Caco-2 (cell line): ENCODE measurements at regions of chr14 and their contacts with region 1.

Region 1: GRCh38 chr14:95609387-95609990 is 74.6 kb downstream of the GLRX5 start:
- DNase-seq: peak; percentile 51 to 58
- H3K4me3 ChIP-seq: no peak overlapping the region
- H3K4me3 Mint-ChIP-seq: no peak overlapping the region
- H3K27ac Mint-ChIP-seq: no peak overlapping the region
- H3K4me1 ChIP-seq: peaks cover 3% of the 10 kb centered on the region; the same call in 1 of the 2 replicates
- H3K4me1 Mint-ChIP-seq: no peaks in the 10 kb centered on the region
- H3K27me3 ChIP-seq: no peaks in the 10 kb centered on the region; the same call in none of the 2 replicates
- H3K27me3 Mint-ChIP-seq: peaks cover 24% of the 10 kb centered on the region
- CTCF ChIP-seq: peak; percentile 75 to 77

Region 2: GRCh38 chr14:95679998-95680735 is 70.7 kb after region 1 on chr14:
- CTCF ChIA-PET with region 1: interaction called, 3 read pairs
- POLR2A ChIA-PET with region 1: no interaction called
- intact Hi-C with region 1: loop called (anchors 2 kb)
- DNase-seq: peak; percentile 44 to 49
- H3K4me3 ChIP-seq: no peak overlapping the region
- H3K4me3 Mint-ChIP-seq: no peak overlapping the region
- H3K27ac Mint-ChIP-seq: no peak overlapping the region
- H3K4me1 ChIP-seq: peaks cover 5% of the 10 kb centered on the region; the same call in 1 of the 2 replicates
- H3K4me1 Mint-ChIP-seq: no peaks in the 10 kb centered on the region
- H3K27me3 ChIP-seq: no peaks in the 10 kb centered on the region
- H3K27me3 Mint-ChIP-seq: peaks cover 12% of the 10 kb centered on the region
- CTCF ChIP-seq: peak; percentile 37 to 65

Region 3: GRCh38 chr14:95697764-95698163 is 88.3 kb after region 1 on chr14:
- CTCF ChIA-PET with region 1: no interaction called
- POLR2A ChIA-PET with region 1: no interaction called
- intact Hi-C with region 1: loop called (anchors 1 kb)
- DNase-seq: no peak
- H3K4me3 ChIP-seq: no peak overlapping the region
- H3K4me3 Mint-ChIP-seq: no peak overlapping the region
- H3K27ac Mint-ChIP-seq: no peak overlapping the region
- H3K4me1 ChIP-seq: no peaks in the 10 kb centered on the region
- H3K4me1 Mint-ChIP-seq: no peaks in the 10 kb centered on the region
- H3K27me3 ChIP-seq: no peaks in the 10 kb centered on the region; the same call in none of the 2 replicates
- H3K27me3 Mint-ChIP-seq: peaks cover 25% of the 10 kb centered on the region
- CTCF ChIP-seq: no peak

Region 4: DNA sequence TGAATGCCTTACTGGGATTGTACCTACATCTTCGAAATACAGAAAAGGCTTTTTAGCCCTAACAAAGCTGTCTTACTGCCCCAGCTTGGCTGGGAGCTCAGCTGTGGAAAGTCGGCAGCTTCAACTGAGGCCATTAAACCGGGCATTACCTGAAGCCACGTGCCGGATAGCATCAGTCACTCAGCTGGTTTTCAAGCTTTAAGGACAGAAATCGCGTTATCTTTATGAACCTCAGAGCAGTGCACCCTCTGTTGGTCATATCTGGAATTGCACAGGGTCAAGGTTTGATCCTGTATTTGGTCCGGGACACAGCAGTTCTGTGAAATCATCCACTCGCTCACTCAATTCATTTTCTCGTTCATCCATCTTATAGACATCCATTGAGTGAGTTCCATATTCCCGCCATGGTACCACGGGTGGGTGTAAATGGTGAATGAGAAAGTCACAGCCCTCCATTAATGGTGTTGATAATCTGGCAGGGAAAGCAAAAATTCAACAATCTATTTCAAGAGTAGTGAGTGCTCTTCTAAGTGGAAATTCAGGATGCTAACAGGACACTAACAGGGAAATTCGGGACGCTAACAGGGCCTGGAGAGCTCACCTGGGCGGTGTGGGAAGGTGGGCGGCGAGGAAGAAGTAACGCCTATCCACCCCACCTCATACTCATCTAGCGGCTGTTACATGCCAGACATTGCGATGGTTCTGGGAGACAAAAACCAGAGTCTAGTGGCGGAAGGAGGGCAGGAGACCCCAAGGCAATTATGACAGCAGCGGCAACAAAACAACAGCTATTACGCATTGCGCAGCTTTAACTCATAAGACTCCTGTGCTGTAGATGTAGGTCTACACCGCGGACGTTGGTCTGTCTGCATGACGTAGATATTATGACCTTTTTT is 165.0 kb after region 1 on chr14:
- CTCF ChIA-PET with region 1: interaction called, 4 read pairs
- POLR2A ChIA-PET with region 1: no interaction called
- intact Hi-C with region 1: loop called (anchors 1 kb)
- DNase-seq: peak; percentile 53 to 62
- H3K4me3 ChIP-seq: no peak overlapping the region
- H3K4me3 Mint-ChIP-seq: no peak overlapping the region
- H3K27ac Mint-ChIP-seq: no peak overlapping the region
- H3K4me1 ChIP-seq: no peaks in the 10 kb centered on the region
- H3K4me1 Mint-ChIP-seq: no peaks in the 10 kb centered on the region
- H3K27me3 ChIP-seq: no peaks in the 10 kb centered on the region
- H3K27me3 Mint-ChIP-seq: peaks cover 20% of the 10 kb centered on the region
- CTCF ChIP-seq: peak; percentile 75 to 79

Region 5: GRCh38 chr14:95850417-95850816 is 240.9 kb after region 1 on chr14:
- CTCF ChIA-PET with region 1: no interaction called
- POLR2A ChIA-PET with region 1: no interaction called
- intact Hi-C with region 1: no loop called
- DNase-seq: no peak
- H3K4me3 ChIP-seq: no peak overlapping the region
- H3K4me3 Mint-ChIP-seq: no peak overlapping the region
- H3K27ac Mint-ChIP-seq: no peak overlapping the region
- H3K4me1 ChIP-seq: no peaks in the 10 kb centered on the region
- H3K4me1 Mint-ChIP-seq: no peaks in the 10 kb centered on the region
- H3K27me3 ChIP-seq: no peaks in the 10 kb centered on the region
- H3K27me3 Mint-ChIP-seq: peaks cover 20% of the 10 kb centered on the region
- CTCF ChIP-seq: no peak

Region 6: DNA sequence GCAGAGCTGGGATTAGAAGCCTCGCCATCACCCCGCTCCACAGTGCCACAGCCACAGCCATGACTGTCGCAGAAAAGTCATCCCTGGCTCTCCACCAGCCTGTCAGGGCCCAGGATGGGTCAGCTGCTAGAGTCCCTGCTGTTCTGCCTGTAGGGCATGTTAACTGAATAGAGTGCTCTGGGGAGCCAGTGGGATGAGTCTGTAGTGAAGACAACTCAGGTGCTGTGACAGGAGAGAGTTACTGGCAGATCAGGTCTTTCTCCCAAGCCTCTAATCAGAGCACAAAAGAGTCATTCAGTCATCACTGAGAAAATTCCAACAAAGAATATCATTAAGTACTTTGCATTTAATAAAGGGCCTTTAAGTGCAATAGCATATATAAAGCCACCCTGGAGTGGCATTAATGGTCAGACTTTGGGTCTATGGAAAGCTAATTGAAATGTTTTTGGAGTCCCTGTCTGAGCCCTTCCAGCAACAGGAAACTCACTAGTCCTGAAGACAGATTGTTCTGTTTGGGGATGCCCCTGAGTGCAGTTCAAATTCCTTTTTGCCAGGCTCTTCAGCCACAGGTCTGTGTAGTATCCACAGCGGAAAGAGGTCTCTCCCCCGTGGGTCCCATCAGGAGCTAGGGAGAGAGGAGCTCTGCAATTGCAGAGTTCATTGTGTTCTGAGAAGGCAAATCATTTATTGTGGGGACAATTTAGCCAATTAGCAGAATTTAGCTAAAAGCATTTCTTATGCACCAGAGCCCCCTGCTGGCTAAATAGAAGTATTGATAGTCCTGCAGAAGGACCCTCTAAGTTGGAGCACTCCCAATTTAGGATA is 384.5 kb after region 1 on chr14:
- CTCF ChIA-PET with region 1: no interaction called
- POLR2A ChIA-PET with region 1: no interaction called
- intact Hi-C with region 1: loop called (anchors 1 kb)
- DNase-seq: peak in 1 of 2 experiments; percentile 25
- H3K4me3 ChIP-seq: no peak overlapping the region
- H3K4me3 Mint-ChIP-seq: no peak overlapping the region
- H3K27ac Mint-ChIP-seq: no peak overlapping the region
- H3K4me1 ChIP-seq: no peaks in the 10 kb centered on the region
- H3K4me1 Mint-ChIP-seq: no peaks in the 10 kb centered on the region
- H3K27me3 ChIP-seq: no peaks in the 10 kb centered on the region
- H3K27me3 Mint-ChIP-seq: peaks cover 3% of the 10 kb centered on the region
- CTCF ChIP-seq: peak; percentile 76 to 79